Tibial artery (tissue), 4 donors: ENCODE measurements at regions of chr9 and their contacts with region 1.

Region 1: GRCh38 chr9:14347406-14348122 is 33.6 kb upstream of the NFIB start:
- DNase-seq: peak; percentile 69 to 89
- H3K4me3 ChIP-seq: peak overlapping the region; percentile 60 to 69
- H3K27ac ChIP-seq: peak overlapping the region; percentile 92 to 94
- H3K4me1 ChIP-seq: peaks cover 0 to 54% (median 37%) of the 10 kb centered on the region in 4 donors
- H3K27me3 ChIP-seq: no peaks in the 10 kb centered on the region
- CTCF ChIP-seq: no peak

Region 2: GRCh38 chr9:13568841-13569601 is 778.5 kb before region 1 on chr9:
- intact Hi-C with region 1: loop called (anchors 10 kb)
- DNase-seq: no peak
- H3K4me3 ChIP-seq: peak overlapping the region; percentile 39 to 41
- H3K27ac ChIP-seq: peak overlapping the region; percentile 77 to 88
- H3K4me1 ChIP-seq: peaks cover 0 to 41% (median 20%) of the 10 kb centered on the region in 4 donors
- H3K27me3 ChIP-seq: no peaks in the 10 kb centered on the region
- CTCF ChIP-seq: no peak

Region 3: DNA sequence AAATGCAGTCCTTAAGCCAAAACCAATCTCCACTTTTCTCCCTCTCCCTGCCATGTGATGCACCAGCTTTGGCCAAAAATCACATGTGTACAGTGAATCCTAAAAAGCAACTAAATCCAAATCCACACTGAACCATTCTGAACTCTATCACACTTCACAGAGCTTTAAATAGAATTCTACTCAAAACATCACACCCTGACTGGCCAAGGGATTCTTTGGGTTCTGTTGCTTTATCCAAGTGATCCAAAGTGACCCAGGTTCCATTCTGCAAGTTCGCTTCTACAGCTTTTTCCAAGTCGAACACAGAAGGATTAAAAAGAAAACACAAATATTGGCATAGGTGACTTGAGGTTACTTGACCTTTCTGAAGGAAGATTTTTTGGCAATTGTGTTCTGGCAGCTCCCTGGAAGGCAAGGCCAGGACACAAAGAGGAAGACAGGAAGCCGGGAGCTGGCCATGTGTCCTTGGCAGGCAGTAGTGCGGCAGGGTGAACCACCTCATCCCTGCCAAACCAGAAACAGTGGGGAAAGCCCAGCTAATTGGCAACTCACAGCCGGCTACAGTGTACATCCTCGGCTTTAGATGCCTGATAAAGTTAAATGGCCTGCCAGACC is 148.6 kb before region 1 on chr9:
- intact Hi-C with region 1: no loop called
- DNase-seq: peak; percentile 66 to 78
- H3K4me3 ChIP-seq: no peak overlapping the region
- H3K27ac ChIP-seq: peak overlapping the region; percentile 36 to 46
- H3K4me1 ChIP-seq: peaks cover 6 to 90% (median 46%) of the 10 kb centered on the region in 4 donors
- H3K27me3 ChIP-seq: no peaks in the 10 kb centered on the region
- CTCF ChIP-seq: no peak

Region 4: GRCh38 chr9:14322211-14323082 is 25.1 kb before region 1 on chr9:
- intact Hi-C with region 1: loop called (anchors 2 kb)
- DNase-seq: peak; percentile 91 to 97
- H3K4me3 ChIP-seq: peak overlapping the region; percentile 87 to 94
- H3K27ac ChIP-seq: peak overlapping the region; percentile 99 to 100
- H3K4me1 ChIP-seq: peaks cover 0 to 81% (median 24%) of the 10 kb centered on the region in 4 donors
- H3K27me3 ChIP-seq: no peaks in the 10 kb centered on the region
- CTCF ChIP-seq: peak; percentile 62 to 71

Region 5: DNA sequence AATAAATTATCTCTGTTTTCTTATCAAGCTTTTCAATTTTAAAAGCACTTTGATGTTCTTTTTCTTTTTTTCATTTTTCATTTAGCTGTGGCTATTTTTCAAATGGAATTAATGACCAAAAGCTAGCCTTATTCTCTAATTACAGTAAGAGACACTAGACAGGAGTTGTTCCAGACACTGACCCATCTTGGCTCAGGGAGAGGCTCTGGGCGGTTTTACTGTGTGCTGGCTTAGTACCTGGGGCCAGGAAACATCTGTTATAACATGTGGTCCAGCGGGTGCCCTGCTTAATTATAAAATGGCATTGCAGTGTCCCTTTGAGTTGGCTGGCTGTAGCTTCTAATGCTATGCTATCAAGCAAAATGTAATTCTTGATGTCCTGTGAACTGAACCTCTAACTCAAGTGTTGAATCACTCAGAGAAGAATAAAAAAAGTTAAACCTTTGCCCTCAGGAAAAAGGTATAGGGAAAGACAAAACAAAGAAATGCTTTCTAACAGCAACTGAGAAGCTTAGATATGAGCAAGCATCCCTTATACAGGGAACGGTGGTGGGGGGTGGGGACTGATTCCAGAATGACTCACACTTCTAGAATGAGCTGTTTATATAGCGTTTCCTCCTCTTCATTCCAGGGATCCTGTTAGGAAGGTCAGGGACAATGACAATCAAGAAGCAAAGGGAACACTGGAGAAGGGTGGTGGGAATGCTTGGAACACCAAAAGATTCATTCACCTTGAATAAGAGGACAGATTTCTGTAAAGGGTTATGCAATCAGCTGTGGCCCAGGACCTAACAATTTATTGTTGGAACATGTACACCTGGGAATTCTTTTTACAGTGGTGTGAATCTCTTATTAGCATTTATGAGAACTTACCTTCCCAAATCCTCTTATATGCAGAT is 25.1 kb after region 1 on chr9:
- intact Hi-C with region 1: no loop called
- DNase-seq: no peak
- H3K4me3 ChIP-seq: no peak overlapping the region
- H3K27ac ChIP-seq: no peak overlapping the region
- H3K4me1 ChIP-seq: peaks cover 0 to 16% (median 5%) of the 10 kb centered on the region in 4 donors
- H3K27me3 ChIP-seq: no peaks in the 10 kb centered on the region
- CTCF ChIP-seq: no peak